MCF 10A (cell line): ENCODE measurements at regions of chr3 and their contacts with region 1.

Region 1: DNA sequence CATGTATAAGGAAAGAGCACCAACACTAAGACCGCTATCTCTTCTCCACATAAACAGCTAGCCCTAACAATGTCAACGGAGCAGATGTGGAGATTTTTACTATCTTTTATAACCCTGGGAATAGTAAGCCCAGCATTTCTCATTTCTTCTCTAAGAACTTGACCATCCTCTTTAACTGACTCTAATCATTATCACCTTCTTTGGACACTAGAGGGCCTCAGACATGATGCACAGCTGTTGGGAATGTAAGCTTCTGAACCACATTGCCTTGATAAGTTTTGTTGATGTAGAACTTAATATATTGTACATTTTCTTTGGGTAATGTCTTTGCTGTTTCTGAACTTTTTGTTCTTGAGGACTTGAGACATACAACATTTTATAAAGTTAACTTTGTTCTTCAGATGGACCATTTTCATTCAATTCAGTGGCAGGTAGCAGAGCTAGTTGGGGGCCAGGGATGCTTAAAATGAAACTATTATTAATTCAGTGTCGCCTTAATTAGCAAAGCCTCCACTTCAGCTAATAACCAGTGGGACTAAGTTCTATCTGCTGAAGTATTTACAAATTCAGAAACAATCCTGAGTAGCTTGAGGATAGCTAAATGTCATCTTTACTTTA is 9.6 kb upstream of the TAGLN3 start:
- DNase-seq: peak; percentile 74
- H3K4me3 Mint-ChIP-seq: no peak overlapping the region
- H3K27ac Mint-ChIP-seq: no peak overlapping the region
- H3K4me1 Mint-ChIP-seq: peaks cover 24% of the 10 kb centered on the region
- H3K27me3 Mint-ChIP-seq: no peaks in the 10 kb centered on the region
- CTCF ChIP-seq: peak; percentile 47

Region 2: DNA sequence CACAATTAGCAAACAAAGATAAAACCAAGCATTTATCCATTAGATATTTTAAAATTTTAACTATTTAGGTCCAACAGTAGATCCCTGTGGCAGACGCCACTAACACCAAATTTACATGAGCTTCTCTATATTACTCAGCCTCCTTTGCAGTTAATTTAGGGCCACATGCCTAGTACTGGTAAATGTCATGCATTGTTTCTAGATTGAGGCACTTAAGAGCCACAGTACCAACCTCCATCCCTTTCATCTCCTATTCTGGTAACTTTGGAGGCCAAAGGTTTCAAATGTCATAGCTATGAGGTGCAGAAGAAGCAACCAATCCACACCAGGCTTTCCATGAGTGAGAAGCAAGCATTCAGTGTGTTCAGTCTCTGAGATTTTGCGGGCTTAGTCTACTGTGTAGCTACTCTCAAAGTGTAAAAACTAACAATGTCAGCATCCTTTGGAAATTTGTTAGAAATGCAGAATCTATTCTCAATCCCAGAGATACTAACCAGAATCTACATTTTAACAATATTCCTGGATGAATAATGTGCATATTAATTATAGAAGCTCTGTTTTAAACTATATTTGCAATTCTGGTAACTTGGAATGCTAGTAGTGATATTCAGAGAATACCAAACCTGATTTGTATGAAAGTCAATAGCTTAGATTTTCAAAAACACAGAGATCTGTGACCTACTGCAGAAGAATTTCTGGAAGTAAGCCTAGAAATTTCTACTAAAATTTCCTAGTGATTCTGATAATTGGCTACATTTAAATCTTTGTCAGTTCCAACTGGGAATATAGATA is 653.5 kb before region 1 on chr3:
- CTCF ChIA-PET with region 1: no interaction called
- POLR2A ChIA-PET with region 1: no interaction called
- intact Hi-C with region 1: no loop called
- DNase-seq: no peak
- H3K4me3 Mint-ChIP-seq: no peak overlapping the region
- H3K27ac Mint-ChIP-seq: no peak overlapping the region
- H3K4me1 Mint-ChIP-seq: peaks cover 23% of the 10 kb centered on the region
- H3K27me3 Mint-ChIP-seq: no peaks in the 10 kb centered on the region
- CTCF ChIP-seq: no peak

Region 3: GRCh38 chr3:111947231-111947630 is 41.9 kb before region 1 on chr3:
- CTCF ChIA-PET with region 1: no interaction called
- POLR2A ChIA-PET with region 1: no interaction called
- intact Hi-C with region 1: no loop called
- DNase-seq: no peak
- H3K4me3 Mint-ChIP-seq: no peak overlapping the region
- H3K27ac Mint-ChIP-seq: peak overlapping the region; percentile 11
- H3K4me1 Mint-ChIP-seq: peaks cover 14% of the 10 kb centered on the region
- H3K27me3 Mint-ChIP-seq: no peaks in the 10 kb centered on the region
- CTCF ChIP-seq: no peak

Region 4: DNA sequence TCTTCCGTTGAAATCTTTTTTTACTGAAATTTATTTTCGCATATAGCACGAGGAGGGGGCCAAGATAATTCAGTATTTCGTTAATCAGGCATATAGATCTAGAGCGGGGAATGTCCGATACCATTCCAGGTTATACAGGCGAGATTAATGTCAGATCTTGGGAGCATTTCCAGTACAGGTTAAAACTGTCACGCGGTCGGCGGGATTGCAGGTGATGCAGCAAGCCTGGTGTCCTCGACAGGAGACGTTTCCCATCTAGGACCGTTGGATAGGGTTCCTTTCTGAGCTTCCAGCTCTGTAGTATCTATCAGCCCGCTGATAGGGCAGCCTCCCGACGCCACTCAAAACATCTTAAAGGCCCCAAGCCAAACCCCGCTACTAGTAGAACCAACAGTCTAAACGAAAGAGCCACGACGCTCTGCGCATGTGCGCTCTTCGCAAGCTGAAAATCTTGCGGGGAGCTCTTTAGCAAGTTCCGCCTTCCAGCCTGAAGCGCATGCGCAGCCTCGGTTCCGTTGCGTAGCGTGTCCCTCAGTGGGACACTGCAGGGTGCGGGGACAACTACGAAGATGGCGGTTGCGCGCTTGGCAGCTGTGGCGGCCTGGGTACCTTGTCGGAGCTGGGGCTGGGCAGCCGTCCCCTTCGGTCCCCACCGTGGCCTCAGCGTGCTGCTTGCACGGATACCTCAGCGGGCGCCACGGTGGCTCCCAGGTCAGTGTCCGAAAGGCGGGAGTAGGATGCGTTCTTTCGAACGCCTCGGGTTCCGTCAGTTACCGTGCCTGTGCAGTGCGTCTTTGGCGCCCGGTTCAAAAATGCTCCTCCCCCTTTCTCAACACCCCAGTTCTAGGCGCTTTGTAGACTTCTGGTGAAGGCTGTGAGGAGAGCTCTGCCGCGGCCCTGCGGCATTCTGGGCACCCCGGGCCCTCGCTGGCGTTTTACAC is 10.4 kb before region 1 on chr3 and contains the start of gene ABHD10:
- CTCF ChIA-PET with region 1: interaction called, 21 read pairs
- POLR2A ChIA-PET with region 1: interaction called, 22 read pairs
- intact Hi-C with region 1: no loop called
- DNase-seq: peak; percentile 98
- H3K4me3 Mint-ChIP-seq: peak within 1 kb of the TSS; percentile 85
- H3K27ac Mint-ChIP-seq: peak within 1 kb of the TSS; percentile 66
- H3K4me1 Mint-ChIP-seq: peaks cover 5% of the 10 kb centered on the region
- H3K27me3 Mint-ChIP-seq: no peaks in the 10 kb centered on the region
- CTCF ChIP-seq: no peak
- total RNA-seq, gene ABHD10: 26.0 and 34.1 TPM in 2 replicates

Region 5: GRCh38 chr3:112007633-112008032 is 18.5 kb after region 1 on chr3:
- CTCF ChIA-PET with region 1: interaction called, 101 read pairs
- POLR2A ChIA-PET with region 1: interaction called, 5 read pairs
- intact Hi-C with region 1: no loop called
- DNase-seq: no peak
- H3K4me3 Mint-ChIP-seq: no peak overlapping the region
- H3K27ac Mint-ChIP-seq: no peak overlapping the region
- H3K4me1 Mint-ChIP-seq: peaks cover 3% of the 10 kb centered on the region
- H3K27me3 Mint-ChIP-seq: no peaks in the 10 kb centered on the region
- CTCF ChIP-seq: no peak

Region 6: GRCh38 chr3:112086076-112086854 is 97.1 kb after region 1 on chr3 and contains the start of gene C3orf52:
- CTCF ChIA-PET with region 1: interaction called, 4 read pairs
- POLR2A ChIA-PET with region 1: no interaction called
- intact Hi-C with region 1: loop called (anchors 1 kb)
- DNase-seq: peak; percentile 87
- H3K4me3 Mint-ChIP-seq: peak within 1 kb of the TSS; percentile 90
- H3K27ac Mint-ChIP-seq: peak within 1 kb of the TSS; percentile 96
- H3K4me1 Mint-ChIP-seq: peaks cover 25% of the 10 kb centered on the region
- H3K27me3 Mint-ChIP-seq: no peaks in the 10 kb centered on the region
- CTCF ChIP-seq: no peak
- total RNA-seq, gene C3orf52: 10.4 and 16.1 TPM in 2 replicates